ENCODE measurements at regions of chr11 and their contacts with region 1.

Region 1: GRCh38 chr11:33742249-33742851 is 6.1 kb upstream of the CD59 start:
- DNase-seq: peak; percentile 20
- H3K4me3 ChIP-seq: no peak overlapping the region
- H3K27ac ChIP-seq: no peak overlapping the region
- H3K4me1 ChIP-seq: peaks cover 3 to 4% of the 10 kb centered on the region in 2 experiments; a peak in 3 of 4 replicates
- H3K27me3 ChIP-seq: no peaks in the 10 kb centered on the region
- CTCF ChIP-seq: peak; percentile 73
- EP300 ChIP-seq: no peak
- RAD21 ChIP-seq: peak; percentile 59

Region 2: DNA sequence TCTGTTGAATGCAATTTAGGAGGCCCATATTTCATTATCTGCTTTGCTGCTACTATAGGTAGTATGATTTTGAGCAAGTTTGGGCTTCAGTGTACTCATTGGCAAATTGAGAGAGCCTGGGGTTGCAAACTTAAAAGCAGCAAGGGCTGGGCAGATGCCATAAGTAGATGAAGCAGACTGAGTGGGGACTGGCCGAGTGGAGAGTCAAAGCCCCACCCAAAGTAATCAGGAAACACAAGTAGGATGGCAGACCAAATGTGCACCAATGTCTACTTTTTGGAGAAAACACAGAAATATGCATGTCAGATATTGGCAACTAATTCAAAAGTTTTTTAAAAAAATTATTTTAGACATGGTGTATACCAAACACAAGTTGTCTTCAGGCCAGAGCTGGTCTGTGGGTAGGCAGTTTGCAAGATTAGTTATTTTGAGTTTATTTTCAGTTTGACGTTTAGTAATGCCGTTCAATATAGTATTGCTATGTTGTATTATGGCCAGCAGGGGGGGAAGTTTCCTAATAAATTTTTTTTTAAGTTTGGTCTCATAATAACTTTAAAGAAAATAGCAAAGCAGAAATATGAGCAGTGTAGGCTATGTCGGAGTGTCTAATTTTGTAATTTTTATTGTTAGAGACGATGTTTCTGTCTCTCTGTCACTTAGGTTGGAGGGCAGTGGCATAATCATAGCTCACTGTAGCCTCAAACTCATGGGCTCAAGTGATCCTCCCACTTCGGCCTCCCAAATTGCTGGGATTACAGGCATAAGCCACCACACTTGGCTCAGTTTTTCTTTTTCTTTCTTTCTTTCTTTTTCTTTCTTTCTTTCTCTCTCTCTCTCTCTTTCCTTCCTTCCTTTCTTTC is 380.1 kb before region 1 on chr11:
- CTCF ChIA-PET with region 1: interaction called, 31 read pairs
- POLR2A ChIA-PET with region 1: no interaction called
- DNase-seq: no peak
- H3K4me3 ChIP-seq: no peak overlapping the region; a peak in 1 of 4 replicates
- H3K27ac ChIP-seq: 0 out of 4 replicates have a peak overlapping the region, but pooled peaks of 1 of the 2 experiments have one; percentile 25
- H3K4me1 ChIP-seq: no peaks in the 10 kb centered on the region; a peak in 2 of 4 replicates
- H3K27me3 ChIP-seq: no peaks in the 10 kb centered on the region
- CTCF ChIP-seq: peak; percentile 75
- EP300 ChIP-seq: no peak
- RAD21 ChIP-seq: peak; percentile 79

Region 3: GRCh38 chr11:33687733-33688479 is 54.4 kb before region 1 on chr11:
- CTCF ChIA-PET with region 1: interaction called, 18 read pairs
- POLR2A ChIA-PET with region 1: no interaction called
- DNase-seq: peak; percentile 71
- H3K4me3 ChIP-seq: no peak overlapping the region; a peak in 1 of 4 replicates
- H3K27ac ChIP-seq: peak overlapping the region in 1 of 2 experiments; percentile 100; a peak in 2 of 4 replicates
- H3K4me1 ChIP-seq: peaks cover 12 to 45% of the 10 kb centered on the region in 2 experiments
- H3K27me3 ChIP-seq: no peaks in the 10 kb centered on the region
- CTCF ChIP-seq: peak; percentile 88
- EP300 ChIP-seq: no peak
- RAD21 ChIP-seq: peak; percentile 98

Region 4: DNA sequence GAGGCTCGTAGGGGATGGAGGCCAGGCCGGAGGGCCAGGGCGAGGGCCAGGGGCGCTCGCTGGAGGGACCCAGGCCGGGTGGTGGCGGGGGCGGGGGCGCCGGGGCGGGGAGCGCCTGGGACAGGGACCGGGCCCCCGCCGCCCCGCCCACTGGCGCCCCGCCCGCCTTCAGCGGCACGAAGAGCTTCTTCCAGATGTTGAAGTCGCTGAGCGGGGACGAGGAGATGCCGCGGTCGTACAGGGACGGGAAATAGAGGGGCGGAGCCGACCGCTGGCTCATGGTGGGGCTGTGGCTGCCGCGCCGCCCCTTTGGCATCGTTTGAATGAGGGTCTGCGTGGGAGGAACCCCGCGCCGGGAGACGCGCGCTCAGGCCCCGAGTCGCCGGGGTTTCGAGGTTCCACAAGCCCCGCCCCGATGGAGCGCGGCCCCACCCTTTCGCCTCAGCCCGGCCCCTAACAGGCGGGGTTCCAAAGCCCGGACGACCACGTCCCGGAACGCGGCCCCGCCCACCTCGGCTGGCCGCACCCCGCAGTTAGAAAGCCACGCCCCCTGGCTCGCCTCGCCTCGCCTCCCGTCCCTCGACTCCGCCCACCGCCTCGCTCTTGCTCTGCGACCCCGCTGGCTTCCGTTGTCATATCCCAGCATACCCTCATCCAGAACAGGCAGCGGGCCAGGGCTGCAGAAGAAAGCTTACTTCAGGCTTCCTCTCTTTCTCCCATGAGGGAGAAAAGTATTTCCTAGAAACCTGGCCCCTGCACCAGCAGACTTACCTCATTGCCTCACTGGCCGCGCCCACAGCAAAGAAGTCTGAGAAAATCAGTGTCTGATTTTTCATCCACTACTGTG is 41.7 kb before region 1 on chr11 and contains the start of gene C11orf91:
- CTCF ChIA-PET with region 1: interaction called, 20 read pairs
- POLR2A ChIA-PET with region 1: interaction called, 5 read pairs
- DNase-seq: peak; percentile 98
- H3K4me3 ChIP-seq: peak within 1 kb of the TSS; percentile 49 to 59
- H3K27ac ChIP-seq: peak within 1 kb of the TSS; percentile 93 to 94
- H3K4me1 ChIP-seq: peaks cover 13 to 36% of the 10 kb centered on the region in 2 experiments; a peak in 2 of 4 replicates
- H3K27me3 ChIP-seq: no peaks in the 10 kb centered on the region
- CTCF ChIP-seq: no peak
- EP300 ChIP-seq: no peak
- RAD21 ChIP-seq: no peak
- polyA plus RNA-seq, gene C11orf91: 0.10 and 0.15 TPM in 2 replicates

Region 5: GRCh38 chr11:33753304-33753967 is 11.1 kb after region 1 on chr11:
- CTCF ChIA-PET with region 1: interaction called, 13 read pairs
- POLR2A ChIA-PET with region 1: no interaction called
- DNase-seq: no peak
- H3K4me3 ChIP-seq: no peak overlapping the region
- H3K27ac ChIP-seq: peak overlapping the region in 1 of 2 experiments; percentile 47; a peak in 2 of 4 replicates
- H3K4me1 ChIP-seq: peaks cover 0 to 7% of the 10 kb centered on the region in 2 experiments; a peak in 3 of 4 replicates
- H3K27me3 ChIP-seq: no peaks in the 10 kb centered on the region
- CTCF ChIP-seq: no peak
- EP300 ChIP-seq: no peak
- RAD21 ChIP-seq: no peak

Measured in SK-N-SH (cell line).